ENCODE measurements at regions of chr14 and their contacts with region 1.

Region 1: GRCh38 chr14:54291491-54292191 is 105.2 kb upstream of the CDKN3 start:
- DNase-seq: no peak

Region 2: GRCh38 chr14:54329082-54329695 is 37.5 kb after region 1 on chr14:
- intact Hi-C with region 1: loop called in 1 of 2 experiments (anchors 2 kb)
- DNase-seq: no peak